MCF 10A (cell line): ENCODE measurements at regions of chr20 and their contacts with region 1.

Region 1: GRCh38 chr20:38748097-38748860 is at the start of gene ACTR5:
- DNase-seq: peak; percentile 83
- H3K4me3 Mint-ChIP-seq: peak within 1 kb of the TSS; percentile 93
- H3K27ac Mint-ChIP-seq: peak within 1 kb of the TSS; percentile 95
- H3K4me1 Mint-ChIP-seq: peaks cover 18% of the 10 kb centered on the region
- H3K27me3 Mint-ChIP-seq: no peaks in the 10 kb centered on the region
- CTCF ChIP-seq: no peak
- total RNA-seq, gene ACTR5: 6.0 and 6.9 TPM in 2 replicates

Region 2: DNA sequence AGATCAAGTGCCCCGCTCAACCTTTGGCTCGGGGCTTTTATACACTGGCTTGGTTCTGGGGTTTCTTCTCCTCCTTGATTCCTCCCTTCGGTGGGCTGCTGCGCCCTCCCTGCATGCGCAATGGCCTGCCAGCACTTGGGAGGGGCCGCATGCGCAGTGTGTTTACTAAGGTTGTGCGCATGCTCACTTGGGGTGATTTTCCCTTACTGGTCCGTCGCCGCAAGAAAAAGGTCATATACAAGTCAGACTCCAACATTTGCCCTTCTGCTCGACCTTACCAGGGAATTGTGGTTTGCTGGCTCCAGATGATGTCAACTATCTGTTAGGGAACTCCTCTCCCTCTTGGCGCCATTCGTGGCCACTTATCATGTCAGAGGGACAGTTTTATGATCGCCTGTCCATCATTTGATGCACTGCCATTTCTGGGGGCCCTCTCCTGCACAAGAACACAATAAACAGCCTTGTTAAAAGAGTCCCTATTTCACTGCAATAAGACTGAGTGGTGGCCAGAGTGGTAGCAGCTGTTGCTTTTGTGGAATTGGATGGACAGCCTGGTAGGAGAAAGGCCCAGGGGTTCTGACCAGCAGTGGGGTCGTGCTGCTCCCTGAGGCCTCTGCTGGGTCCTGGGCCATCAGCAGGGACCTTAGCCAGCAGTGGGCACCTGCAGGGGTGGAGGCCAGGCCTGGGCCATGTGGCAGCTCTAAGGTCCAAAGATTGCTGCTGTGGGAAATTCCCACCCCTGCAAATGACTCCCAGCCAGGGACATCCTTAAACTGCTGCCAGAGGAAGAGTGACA is 404.8 kb before region 1 on chr20:
- CTCF ChIA-PET with region 1: no interaction called
- POLR2A ChIA-PET with region 1: no interaction called
- intact Hi-C with region 1: no loop called
- DNase-seq: no peak
- H3K4me3 Mint-ChIP-seq: no peak overlapping the region
- H3K27ac Mint-ChIP-seq: no peak overlapping the region
- H3K4me1 Mint-ChIP-seq: no peaks in the 10 kb centered on the region
- H3K27me3 Mint-ChIP-seq: peaks cover 11% of the 10 kb centered on the region
- CTCF ChIP-seq: no peak

Region 3: GRCh38 chr20:38418509-38419204 is 329.6 kb before region 1 on chr20:
- CTCF ChIA-PET with region 1: no interaction called
- POLR2A ChIA-PET with region 1: no interaction called
- intact Hi-C with region 1: no loop called
- DNase-seq: peak; percentile 49
- H3K4me3 Mint-ChIP-seq: no peak overlapping the region
- H3K27ac Mint-ChIP-seq: no peak overlapping the region
- H3K4me1 Mint-ChIP-seq: no peaks in the 10 kb centered on the region
- H3K27me3 Mint-ChIP-seq: no peaks in the 10 kb centered on the region
- CTCF ChIP-seq: no peak

Region 4: DNA sequence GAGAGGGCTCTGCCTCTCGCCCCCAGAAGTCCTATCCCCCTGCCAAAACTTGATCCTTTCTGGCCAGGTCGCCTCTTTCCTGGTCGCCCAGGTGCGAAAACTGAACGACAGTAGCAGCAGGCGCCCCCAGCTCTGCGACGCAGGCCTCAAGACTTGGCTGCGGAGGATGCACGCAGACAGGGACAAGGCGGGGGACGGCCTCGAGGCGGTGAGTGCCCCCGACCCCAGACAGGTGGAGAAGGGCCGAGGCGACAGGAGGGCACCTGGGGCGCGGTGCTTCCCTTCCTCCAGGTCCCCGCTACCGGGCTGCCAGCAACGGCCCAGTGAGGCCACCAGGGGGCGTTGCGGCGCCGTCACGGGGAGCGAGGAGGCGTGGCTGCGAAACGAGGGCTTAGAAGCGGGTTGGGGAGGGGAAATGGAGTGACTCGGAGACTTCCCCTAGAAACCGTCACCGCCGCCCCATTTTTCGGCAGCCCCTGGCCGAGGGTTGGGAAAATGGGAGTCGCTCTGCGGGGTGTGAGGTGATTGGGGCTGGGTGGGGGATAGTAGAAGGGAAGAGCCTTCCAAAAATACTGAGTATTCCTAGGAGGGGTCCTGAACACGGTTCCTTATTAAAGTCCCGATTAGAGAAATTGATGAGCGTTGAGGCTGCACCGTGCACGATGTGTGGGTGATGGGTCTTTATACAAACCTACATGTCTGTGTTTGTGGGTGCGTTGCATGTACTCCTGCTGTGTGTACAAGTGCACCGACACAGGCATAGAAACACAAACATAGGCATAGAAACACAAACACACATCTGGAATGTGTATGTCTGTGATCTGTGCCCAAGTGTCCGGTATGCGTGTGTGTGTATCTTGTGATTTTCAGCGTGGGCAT is 102.1 kb before region 1 on chr20:
- CTCF ChIA-PET with region 1: interaction called, 389 read pairs
- POLR2A ChIA-PET with region 1: interaction called, 10 read pairs
- intact Hi-C with region 1: loop called (anchors 1 kb)
- DNase-seq: peak; percentile 74
- H3K4me3 Mint-ChIP-seq: peak overlapping the region; percentile 60
- H3K27ac Mint-ChIP-seq: no peak overlapping the region
- H3K4me1 Mint-ChIP-seq: peaks cover 9% of the 10 kb centered on the region
- H3K27me3 Mint-ChIP-seq: peaks cover 42% of the 10 kb centered on the region
- CTCF ChIP-seq: peak; percentile 96

Region 5: GRCh38 chr20:38730989-38731737 is 17.1 kb before region 1 on chr20:
- CTCF ChIA-PET with region 1: interaction called, 71 read pairs
- POLR2A ChIA-PET with region 1: interaction called, 10 read pairs
- intact Hi-C with region 1: no loop called
- DNase-seq: peak; percentile 59
- H3K4me3 Mint-ChIP-seq: peak overlapping the region; percentile 52
- H3K27ac Mint-ChIP-seq: no peak overlapping the region
- H3K4me1 Mint-ChIP-seq: peaks cover 6% of the 10 kb centered on the region
- H3K27me3 Mint-ChIP-seq: peaks cover 93% of the 10 kb centered on the region
- CTCF ChIP-seq: peak; percentile 95

Region 6: GRCh38 chr20:38875175-38875993 is 127.1 kb after region 1 on chr20:
- CTCF ChIA-PET with region 1: interaction called, 4 read pairs
- POLR2A ChIA-PET with region 1: interaction called, 10 read pairs
- intact Hi-C with region 1: no loop called
- DNase-seq: no peak
- H3K4me3 Mint-ChIP-seq: no peak overlapping the region
- H3K27ac Mint-ChIP-seq: no peak overlapping the region
- H3K4me1 Mint-ChIP-seq: peaks cover 21% of the 10 kb centered on the region
- H3K27me3 Mint-ChIP-seq: no peaks in the 10 kb centered on the region
- CTCF ChIP-seq: no peak